Heart left ventricle (tissue), 16 donors: ENCODE measurements at regions of chr1 and their contacts with region 1.

Region 1: GRCh38 chr1:45490626-45491486 is at the start of gene TESK2:
- DNase-seq: peak; percentile 96 to 97 (median 97)
- ATAC-seq: peak; percentile 98 to 99 (median 99)
- H3K4me3 ChIP-seq: peak within 1 kb of the TSS; percentile 60 to 99 (median 79)
- H3K27ac ChIP-seq: peak within 1 kb of the TSS in 11 of 12 donors; percentile 34 to 87 (median 69)
- H3K4me1 ChIP-seq: peaks cover 0 to 22% (median 11%) of the 10 kb centered on the region in 12 donors
- H3K27me3 ChIP-seq: no peaks in the 10 kb centered on the region
- CTCF ChIP-seq: peak in 4 of 12 donors; percentile 8 to 20 (median 14)
- POLR2A ChIP-seq: peak in 1 of 2 donors; percentile 87
- total RNA-seq, gene TESK2: 0.74 to 4.7 (median 1.5) TPM

Region 2: DNA sequence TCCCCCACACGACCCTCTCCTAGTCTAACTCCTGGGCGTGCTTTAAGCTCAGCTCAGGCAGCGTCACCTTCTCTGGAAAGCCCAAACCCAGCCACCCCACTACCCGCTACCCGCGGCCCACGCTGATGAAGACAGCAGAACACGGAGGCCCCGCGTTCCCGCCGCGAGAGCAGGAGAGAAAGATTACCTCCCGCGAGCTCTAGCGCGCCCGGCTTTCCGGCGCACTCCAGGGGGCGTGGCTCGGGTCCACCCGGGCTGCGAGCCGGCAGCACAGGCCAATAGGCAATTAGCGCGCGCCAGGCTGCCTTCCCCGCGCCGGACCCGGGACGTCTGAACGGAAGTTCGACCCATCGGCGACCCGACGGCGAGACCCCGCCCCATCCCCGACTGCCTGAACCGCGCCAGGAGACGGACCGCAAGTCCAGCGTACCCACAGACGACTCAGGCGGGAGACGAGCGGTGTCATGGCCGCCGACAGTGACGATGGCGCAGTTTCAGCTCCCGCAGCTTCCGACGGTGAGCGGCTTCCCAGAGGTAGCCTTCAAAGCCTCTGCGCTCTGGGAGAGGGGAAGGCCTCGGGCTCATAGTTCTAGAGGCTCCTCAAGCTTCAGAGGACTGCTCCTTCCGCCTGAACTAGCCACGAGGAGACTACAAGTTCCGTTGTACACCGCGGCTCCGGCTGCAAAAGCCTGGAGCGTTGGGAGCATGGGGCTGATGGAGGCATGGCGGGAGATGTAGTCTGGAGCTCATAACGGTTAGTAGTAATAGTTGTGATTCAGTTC is 150.9 kb before region 1 on chr1 and contains the starts of genes MUTYH and TOE1:
- intact Hi-C with region 1: loop called in 1 of 10 experiments (anchors 5 kb)
- DNase-seq: peak; percentile 93 to 96 (median 96)
- ATAC-seq: peak; percentile 92 to 96 (median 96)
- H3K4me3 ChIP-seq: peak within 1 kb of the TSS; percentile 65 to 98 (median 86)
- H3K27ac ChIP-seq: peak within 1 kb of the TSS; percentile 89 to 99 (median 98)
- H3K4me1 ChIP-seq: peaks cover 0 to 32% (median 22%) of the 10 kb centered on the region in 12 donors
- H3K27me3 ChIP-seq: no peaks in the 10 kb centered on the region
- CTCF ChIP-seq: peak in 3 of 12 donors; percentile 5 to 27 (median 26)
- POLR2A ChIP-seq: peak in 1 of 2 donors; percentile 60
- total RNA-seq, gene MUTYH: 4.4 to 11.9 (median 7.1) TPM
- total RNA-seq, gene TOE1: 2.7 to 7.9 (median 3.7) TPM

Region 3: DNA sequence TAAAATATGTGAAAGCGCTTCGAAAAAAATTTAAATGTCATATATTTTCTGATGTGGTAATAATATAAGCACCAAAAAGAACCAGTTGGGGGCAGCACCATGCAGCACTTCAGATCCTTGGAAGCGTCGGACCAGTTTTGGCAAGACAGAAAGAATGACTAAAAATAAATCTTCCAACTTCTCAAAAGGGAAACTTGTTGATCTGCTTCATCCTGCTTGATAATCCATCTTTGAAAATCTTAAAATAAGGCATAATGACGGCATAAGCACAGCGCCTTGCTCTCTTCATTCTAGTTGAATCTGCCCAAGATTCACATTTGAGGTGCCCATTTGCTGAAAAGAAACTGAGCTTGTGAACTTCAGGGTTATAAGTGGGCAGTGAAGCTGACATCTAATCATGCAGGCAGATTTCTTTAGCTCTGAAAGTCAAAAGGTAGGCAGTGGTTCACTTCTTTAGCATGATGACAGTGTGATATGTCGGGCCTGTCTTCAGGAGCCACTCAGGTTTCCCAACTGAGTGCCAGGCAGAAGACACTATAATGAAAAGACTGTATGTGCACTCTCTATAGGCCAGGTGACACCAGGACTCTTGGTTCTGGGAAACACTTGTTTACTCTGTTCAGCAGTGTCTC is 130.9 kb before region 1 on chr1:
- intact Hi-C with region 1: loop called (anchors 1 to 2 kb)
- DNase-seq: peak in 4 of 5 donors; percentile 60 to 77 (median 70)
- ATAC-seq: peak; percentile 70 to 87 (median 84)
- H3K4me3 ChIP-seq: peak overlapping the region in 6 of 12 donors; percentile 1 to 26 (median 16)
- H3K27ac ChIP-seq: peak overlapping the region; percentile 19 to 83 (median 65)
- H3K4me1 ChIP-seq: peaks cover 0 to 21% (median 14%) of the 10 kb centered on the region in 12 donors
- H3K27me3 ChIP-seq: no peaks in the 10 kb centered on the region
- CTCF ChIP-seq: peak; percentile 57 to 86 (median 77)
- POLR2A ChIP-seq: no peak

Region 4: DNA sequence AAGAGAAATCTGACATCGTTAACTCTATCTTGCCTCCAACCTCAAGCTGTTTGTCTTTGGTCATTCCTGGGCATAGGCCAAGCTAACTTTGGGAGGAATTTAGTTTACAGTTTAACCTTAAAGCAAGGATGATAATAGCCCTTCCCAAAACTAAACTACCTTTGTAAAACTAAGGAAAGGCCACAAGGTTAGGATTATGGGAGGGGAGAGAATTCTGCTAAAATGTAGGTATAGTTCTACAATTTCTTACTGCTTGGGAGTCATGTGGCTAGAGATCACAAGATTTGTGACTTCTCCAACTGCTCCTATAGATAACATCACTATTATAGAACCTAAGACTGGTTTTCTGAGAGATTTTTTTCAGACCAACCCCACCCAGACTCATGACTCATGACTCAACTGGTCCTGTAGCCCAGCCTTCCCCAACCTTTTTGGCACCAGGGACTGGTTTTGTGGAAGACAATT is 80.0 kb before region 1 on chr1:
- intact Hi-C with region 1: no loop called
- DNase-seq: no peak
- ATAC-seq: no peak
- H3K4me3 ChIP-seq: no peak overlapping the region
- H3K27ac ChIP-seq: no peak overlapping the region
- H3K4me1 ChIP-seq: peaks cover 0 to 9% (median 0%) of the 10 kb centered on the region in 12 donors
- H3K27me3 ChIP-seq: no peaks in the 10 kb centered on the region
- CTCF ChIP-seq: no peak
- POLR2A ChIP-seq: no peak

Region 5: GRCh38 chr1:45446530-45446929 is 44.3 kb before region 1 on chr1:
- intact Hi-C with region 1: loop called in 1 of 10 experiments (anchors 2 kb)
- DNase-seq: no peak
- ATAC-seq: no peak
- H3K4me3 ChIP-seq: no peak overlapping the region
- H3K27ac ChIP-seq: no peak overlapping the region
- H3K4me1 ChIP-seq: peaks cover 0 to 11% (median 2%) of the 10 kb centered on the region in 12 donors
- H3K27me3 ChIP-seq: no peaks in the 10 kb centered on the region
- CTCF ChIP-seq: no peak
- POLR2A ChIP-seq: no peak